Naive thymus-derived CD4-positive, alpha-beta T cell (primary cell): ENCODE measurements at regions of chr11 and their contacts with region 1.

Region 1: DNA sequence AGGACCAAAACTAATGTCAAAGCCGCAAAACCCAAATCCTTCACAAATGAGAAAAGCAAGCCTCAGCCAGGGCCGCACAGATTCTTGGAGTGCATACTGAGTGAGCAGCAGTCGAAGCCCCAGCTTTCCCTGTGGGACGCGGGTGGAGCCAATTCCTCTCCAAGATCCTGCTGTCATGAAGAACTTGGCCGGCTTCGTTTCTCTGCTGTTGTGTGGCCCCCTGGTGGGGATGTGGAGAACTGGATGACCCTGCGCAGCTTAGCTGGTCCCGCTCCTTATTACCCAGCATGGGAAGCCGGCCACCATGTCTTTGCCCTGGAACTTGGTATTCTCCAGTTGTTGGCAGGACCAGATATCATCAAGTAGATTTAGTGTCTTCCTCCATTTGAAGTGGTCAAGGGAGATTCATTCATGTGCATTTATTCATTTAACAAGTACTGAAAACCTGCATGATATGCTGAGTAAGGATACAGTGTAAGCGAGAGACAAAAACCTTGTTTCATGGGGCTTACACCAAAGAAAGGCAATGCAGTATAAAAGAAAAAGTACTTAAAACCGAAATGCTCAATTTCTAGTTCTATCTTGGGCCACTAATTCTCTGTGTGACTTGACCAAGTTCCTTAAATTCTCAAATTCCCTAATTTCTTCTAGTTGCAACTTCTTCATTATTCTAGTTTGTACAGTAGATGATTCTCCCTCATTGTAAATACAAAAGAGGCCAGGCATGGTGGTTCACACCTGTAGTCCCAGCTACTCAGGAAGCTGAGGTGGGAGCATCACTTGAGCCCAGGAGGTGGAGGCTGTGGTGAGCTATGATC is 56.7 kb upstream of the CRTAM start:
- DNase-seq: peak; percentile 50 to 80 (median 69)
- ATAC-seq: peak; percentile 95
- H3K4me3 ChIP-seq: no peak overlapping the region
- H3K4me3 Mint-ChIP-seq: no peak overlapping the region
- H3K27ac ChIP-seq: no peak overlapping the region
- H3K27ac Mint-ChIP-seq: peak overlapping the region in 2 of 9 donors; percentile 14 to 56
- H3K4me1 ChIP-seq: no peaks in the 10 kb centered on the region
- H3K4me1 Mint-ChIP-seq: peaks cover 0 to 22% (median 11%) of the 10 kb centered on the region in 7 donors
- H3K27me3 ChIP-seq: no peaks in the 10 kb centered on the region
- H3K27me3 Mint-ChIP-seq: no peaks in the 10 kb centered on the region

Region 2: GRCh38 chr11:122505304-122506006 is 276.1 kb before region 1 on chr11:
- CTCF ChIA-PET with region 1: no interaction called
- POLR2A ChIA-PET with region 1: no interaction called
- intact Hi-C with region 1: no loop called
- DNase-seq: peak in 8 of 9 donors; percentile 0 to 51 (median 18)
- ATAC-seq: peak; percentile 78
- H3K4me3 ChIP-seq: no peak overlapping the region
- H3K4me3 Mint-ChIP-seq: no peak overlapping the region
- H3K27ac ChIP-seq: no peak overlapping the region
- H3K27ac Mint-ChIP-seq: no peak overlapping the region
- H3K4me1 ChIP-seq: no peaks in the 10 kb centered on the region
- H3K4me1 Mint-ChIP-seq: peaks cover 0 to 4% (median 0%) of the 10 kb centered on the region in 7 donors
- H3K27me3 ChIP-seq: no peaks in the 10 kb centered on the region
- H3K27me3 Mint-ChIP-seq: peaks cover 10 to 58% (median 44%) of the 10 kb centered on the region in 5 donors

Region 3: GRCh38 chr11:122578168-122578825 is 203.3 kb before region 1 on chr11:
- CTCF ChIA-PET with region 1: interaction called, 20 read pairs
- POLR2A ChIA-PET with region 1: no interaction called
- intact Hi-C with region 1: loop called (anchors 1 kb)
- DNase-seq: no peak
- ATAC-seq: no peak
- H3K4me3 ChIP-seq: no peak overlapping the region
- H3K4me3 Mint-ChIP-seq: no peak overlapping the region
- H3K27ac ChIP-seq: no peak overlapping the region
- H3K27ac Mint-ChIP-seq: no peak overlapping the region
- H3K4me1 ChIP-seq: no peaks in the 10 kb centered on the region
- H3K4me1 Mint-ChIP-seq: peaks cover 5 to 17% (median 11%) of the 10 kb centered on the region in 7 donors
- H3K27me3 ChIP-seq: no peaks in the 10 kb centered on the region
- H3K27me3 Mint-ChIP-seq: peaks cover 0 to 7% (median 0%) of the 10 kb centered on the region in 5 donors

Region 4: DNA sequence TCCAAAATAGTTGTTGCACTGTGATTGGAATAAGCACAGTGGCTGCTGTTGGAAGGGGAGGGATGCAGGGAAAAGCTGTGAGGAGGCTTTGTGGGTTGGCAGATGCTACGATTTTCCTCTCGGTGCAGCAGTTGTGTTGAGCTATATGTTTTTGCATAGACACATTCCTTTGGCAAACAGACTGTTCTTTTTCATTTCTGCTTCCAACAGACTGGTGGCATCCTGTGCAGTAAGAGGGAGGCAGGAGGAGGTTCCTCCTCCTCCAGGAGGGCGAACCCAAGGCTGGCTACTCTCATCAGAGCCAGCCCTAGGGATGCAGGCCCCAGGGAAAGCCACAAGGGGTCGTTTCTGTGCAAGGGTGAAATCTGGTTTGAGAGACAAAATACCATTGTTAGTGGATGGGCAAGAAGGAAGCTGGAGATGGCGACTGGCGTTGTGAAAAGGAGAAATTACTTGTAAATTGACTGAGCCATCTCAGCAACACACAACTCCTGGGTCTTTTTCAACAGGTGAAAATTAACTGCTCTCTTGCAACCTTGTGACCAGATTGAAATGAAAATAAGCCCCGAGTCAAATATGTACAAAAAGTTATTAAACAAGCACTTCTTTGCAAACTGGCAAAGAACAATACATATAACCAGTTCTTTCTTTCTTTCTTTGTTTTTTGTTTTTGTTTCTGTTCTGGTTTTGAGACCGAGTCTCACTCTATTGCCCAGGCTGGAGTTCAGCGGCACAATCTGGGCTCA is 152.6 kb before region 1 on chr11:
- CTCF ChIA-PET with region 1: interaction called, 83 read pairs
- POLR2A ChIA-PET with region 1: interaction called, 8 read pairs
- intact Hi-C with region 1: loop called (anchors 1 kb)
- DNase-seq: peak; percentile 46 to 70 (median 62)
- ATAC-seq: peak; percentile 93
- H3K4me3 ChIP-seq: no peak overlapping the region
- H3K4me3 Mint-ChIP-seq: no peak overlapping the region
- H3K27ac ChIP-seq: no peak overlapping the region
- H3K27ac Mint-ChIP-seq: peak overlapping the region in 4 of 9 donors; percentile 18 to 49 (median 24)
- H3K4me1 ChIP-seq: no peaks in the 10 kb centered on the region
- H3K4me1 Mint-ChIP-seq: peaks cover 0 to 30% (median 16%) of the 10 kb centered on the region in 7 donors
- H3K27me3 ChIP-seq: no peaks in the 10 kb centered on the region
- H3K27me3 Mint-ChIP-seq: peaks cover 0 to 16% (median 0%) of the 10 kb centered on the region in 5 donors

Region 5: DNA sequence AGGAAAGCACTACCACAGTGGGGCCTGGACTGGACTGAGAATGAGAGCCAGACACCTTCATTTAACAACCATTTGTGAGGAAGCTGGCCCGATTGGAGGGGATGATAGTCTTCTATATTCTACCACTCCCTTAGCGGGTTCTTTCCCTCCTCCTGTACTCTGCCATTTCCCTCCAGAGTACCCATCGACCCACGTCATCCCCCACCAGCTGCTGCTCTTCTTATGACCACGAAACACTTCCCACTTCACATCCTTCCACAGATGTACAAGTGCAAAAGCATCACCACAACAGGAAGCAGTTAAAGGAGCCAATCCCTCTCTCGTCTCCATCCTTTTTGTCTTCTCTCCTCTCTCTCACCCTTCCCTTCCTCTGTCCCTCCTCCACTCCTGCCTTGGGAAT is 144.0 kb before region 1 on chr11:
- CTCF ChIA-PET with region 1: interaction called, 39 read pairs
- POLR2A ChIA-PET with region 1: no interaction called
- intact Hi-C with region 1: loop called (anchors 1 kb)
- DNase-seq: peak in 7 of 9 donors; percentile 31 to 67 (median 49)
- ATAC-seq: peak; percentile 74
- H3K4me3 ChIP-seq: no peak overlapping the region
- H3K4me3 Mint-ChIP-seq: no peak overlapping the region
- H3K27ac ChIP-seq: no peak overlapping the region
- H3K27ac Mint-ChIP-seq: peak overlapping the region in 7 of 9 donors; percentile 46 to 81 (median 69)
- H3K4me1 ChIP-seq: peaks cover 0 to 3% of the 10 kb centered on the region in 2 donors
- H3K4me1 Mint-ChIP-seq: peaks cover 0 to 17% (median 10%) of the 10 kb centered on the region in 7 donors
- H3K27me3 ChIP-seq: no peaks in the 10 kb centered on the region
- H3K27me3 Mint-ChIP-seq: peaks cover 0 to 18% (median 0%) of the 10 kb centered on the region in 5 donors

Region 6: GRCh38 chr11:123069908-123070821 is 288.6 kb after region 1 on chr11:
- CTCF ChIA-PET with region 1: no interaction called
- POLR2A ChIA-PET with region 1: no interaction called
- intact Hi-C with region 1: no loop called
- DNase-seq: peak in 7 of 9 donors; percentile 54 to 81 (median 72)
- ATAC-seq: peak; percentile 88
- H3K4me3 ChIP-seq: peak overlapping the region; percentile 58
- H3K4me3 Mint-ChIP-seq: peak overlapping the region; percentile 78 to 96 (median 89)
- H3K27ac ChIP-seq: peak overlapping the region; percentile 76
- H3K27ac Mint-ChIP-seq: peak overlapping the region; percentile 95 to 99 (median 97)
- H3K4me1 ChIP-seq: peaks cover 29 to 49% of the 10 kb centered on the region in 2 donors
- H3K4me1 Mint-ChIP-seq: peaks cover 38 to 73% (median 63%) of the 10 kb centered on the region in 7 donors
- H3K27me3 ChIP-seq: no peaks in the 10 kb centered on the region
- H3K27me3 Mint-ChIP-seq: no peaks in the 10 kb centered on the region